A673 (cell line): ENCODE measurements at regions of chr6 and their contacts with region 1.

Region 1: GRCh38 chr6:20217324-20217855 is 5.1 kb upstream of the MBOAT1 start:
- DNase-seq: peak; percentile 10
- H3K4me3 ChIP-seq: no peak overlapping the region
- H3K27ac ChIP-seq: no peak overlapping the region
- H3K4me1 ChIP-seq: peaks cover 10% of the 10 kb centered on the region
- H3K27me3 ChIP-seq: no peaks in the 10 kb centered on the region
- CTCF ChIP-seq: no peak

Region 2: GRCh38 chr6:18242062-18242851 is 1975.1 kb before region 1 on chr6:
- CTCF ChIA-PET with region 1: interaction called, 11 read pairs
- POLR2A ChIA-PET with region 1: no interaction called
- intact Hi-C with region 1: no loop called
- DNase-seq: no peak
- H3K4me3 ChIP-seq: no peak overlapping the region
- H3K27ac ChIP-seq: peak overlapping the region; percentile 34
- H3K4me1 ChIP-seq: no peaks in the 10 kb centered on the region
- H3K27me3 ChIP-seq: no peaks in the 10 kb centered on the region
- CTCF ChIP-seq: no peak